Calu3 (cell line): ENCODE measurements at regions of chr1 and their contacts with region 1.

Region 1: GRCh38 chr1:181347495-181348390 is 135.6 kb upstream of the CACNA1E start:
- DNase-seq: no peak
- H3K4me3 Mint-ChIP-seq: no peak overlapping the region
- H3K27ac Mint-ChIP-seq: no peak overlapping the region
- H3K4me1 Mint-ChIP-seq: no peaks in the 10 kb centered on the region
- H3K27me3 Mint-ChIP-seq: peaks cover 92% of the 10 kb centered on the region
- CTCF ChIP-seq: no peak

Region 2: GRCh38 chr1:182173808-182174512 is 826.2 kb after region 1 on chr1:
- CTCF ChIA-PET with region 1: interaction called, 11 read pairs
- intact Hi-C with region 1: no loop called
- DNase-seq: no peak
- H3K4me3 Mint-ChIP-seq: no peak overlapping the region
- H3K27ac Mint-ChIP-seq: no peak overlapping the region
- H3K4me1 Mint-ChIP-seq: no peaks in the 10 kb centered on the region
- H3K27me3 Mint-ChIP-seq: no peaks in the 10 kb centered on the region
- CTCF ChIP-seq: no peak